ENCODE measurements at regions of chr7 and their contacts with region 1.

Region 1: DNA sequence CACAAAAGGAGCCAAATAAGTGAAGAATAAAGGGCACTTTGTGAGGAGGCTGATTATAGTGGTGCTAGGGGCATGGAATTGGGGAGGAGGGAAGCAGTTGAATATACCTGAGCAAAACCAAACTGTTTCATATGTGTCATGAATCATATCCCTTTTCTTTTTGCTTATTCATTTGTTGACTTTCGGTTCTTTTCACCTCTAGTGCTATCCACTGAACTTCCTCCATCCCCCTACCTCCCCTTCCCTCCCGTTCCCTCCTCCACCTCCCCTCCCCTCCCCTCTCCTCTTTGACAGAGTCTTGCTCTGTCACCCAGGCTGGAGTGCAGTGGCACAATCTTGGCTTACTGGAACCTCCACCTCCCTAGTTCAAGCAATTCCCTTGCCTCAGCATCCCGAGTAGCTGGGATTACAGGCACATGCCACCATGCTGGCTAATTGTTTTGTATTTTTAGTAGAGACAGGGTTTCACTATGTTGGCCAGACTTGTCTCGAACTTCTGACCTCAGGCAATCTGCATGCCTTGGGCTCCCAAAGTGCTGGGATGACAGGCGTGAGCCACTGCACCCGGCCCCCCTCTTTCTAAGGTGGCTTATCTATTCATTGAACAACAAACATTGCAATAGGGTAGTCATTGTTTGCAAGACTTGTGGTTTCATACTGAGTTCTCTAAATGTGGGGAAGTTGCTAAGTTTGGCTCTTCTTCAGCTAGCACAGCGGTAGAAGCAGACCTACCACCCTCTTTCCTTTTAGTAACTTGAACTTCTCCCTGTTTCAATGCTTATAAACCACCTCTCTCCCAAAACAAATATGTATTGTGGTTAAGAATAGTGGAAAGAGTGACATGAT is 150.4 kb upstream of the PRPS1L1 start:
- DNase-seq: peak; percentile 95
- ATAC-seq: peak; percentile 82
- H3K4me3 ChIP-seq: peak overlapping the region; percentile 56
- H3K27ac ChIP-seq: peak overlapping the region; percentile 99
- H3K4me1 ChIP-seq: peaks cover 54% of the 10 kb centered on the region
- H3K27me3 ChIP-seq: no peaks in the 10 kb centered on the region
- CTCF ChIP-seq: no peak

Region 2: GRCh38 chr7:17769918-17770317 is 408.1 kb before region 1 on chr7:
- CTCF ChIA-PET with region 1: no interaction called
- POLR2A ChIA-PET with region 1: interaction called, 3 read pairs
- intact Hi-C with region 1: loop called (anchors 2 kb)
- DNase-seq: peak; percentile 79
- ATAC-seq: peak; percentile 78
- H3K4me3 ChIP-seq: no peak overlapping the region
- H3K27ac ChIP-seq: no peak overlapping the region
- H3K4me1 ChIP-seq: peaks cover 21% of the 10 kb centered on the region
- H3K27me3 ChIP-seq: no peaks in the 10 kb centered on the region
- CTCF ChIP-seq: peak; percentile 92

Region 3: DNA sequence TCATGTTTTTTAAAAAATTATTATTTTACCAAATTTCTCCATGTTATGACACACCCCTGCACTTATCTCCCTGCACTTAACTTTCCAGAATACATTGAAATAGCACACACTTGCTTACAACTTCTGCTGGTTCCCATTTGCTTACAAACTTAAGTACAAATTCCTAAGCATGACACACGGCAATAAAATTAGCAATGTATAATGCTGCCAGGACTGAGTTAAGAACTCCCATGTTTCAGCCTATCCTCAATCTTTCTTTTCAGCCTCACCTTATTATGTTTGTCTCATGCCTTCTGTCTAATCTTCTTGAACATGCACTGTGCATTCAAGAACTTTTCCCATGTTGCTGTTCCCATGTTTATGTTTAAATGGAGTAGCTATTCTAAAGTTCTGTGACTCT is 191.2 kb before region 1 on chr7:
- CTCF ChIA-PET with region 1: no interaction called
- POLR2A ChIA-PET with region 1: no interaction called
- intact Hi-C with region 1: loop called (anchors 2 kb)
- DNase-seq: peak; percentile 89
- ATAC-seq: peak; percentile 92
- H3K4me3 ChIP-seq: no peak overlapping the region
- H3K27ac ChIP-seq: no peak overlapping the region; the same call in 1 of the 2 replicates
- H3K4me1 ChIP-seq: peaks cover 22% of the 10 kb centered on the region
- H3K27me3 ChIP-seq: no peaks in the 10 kb centered on the region
- CTCF ChIP-seq: no peak

Region 4: DNA sequence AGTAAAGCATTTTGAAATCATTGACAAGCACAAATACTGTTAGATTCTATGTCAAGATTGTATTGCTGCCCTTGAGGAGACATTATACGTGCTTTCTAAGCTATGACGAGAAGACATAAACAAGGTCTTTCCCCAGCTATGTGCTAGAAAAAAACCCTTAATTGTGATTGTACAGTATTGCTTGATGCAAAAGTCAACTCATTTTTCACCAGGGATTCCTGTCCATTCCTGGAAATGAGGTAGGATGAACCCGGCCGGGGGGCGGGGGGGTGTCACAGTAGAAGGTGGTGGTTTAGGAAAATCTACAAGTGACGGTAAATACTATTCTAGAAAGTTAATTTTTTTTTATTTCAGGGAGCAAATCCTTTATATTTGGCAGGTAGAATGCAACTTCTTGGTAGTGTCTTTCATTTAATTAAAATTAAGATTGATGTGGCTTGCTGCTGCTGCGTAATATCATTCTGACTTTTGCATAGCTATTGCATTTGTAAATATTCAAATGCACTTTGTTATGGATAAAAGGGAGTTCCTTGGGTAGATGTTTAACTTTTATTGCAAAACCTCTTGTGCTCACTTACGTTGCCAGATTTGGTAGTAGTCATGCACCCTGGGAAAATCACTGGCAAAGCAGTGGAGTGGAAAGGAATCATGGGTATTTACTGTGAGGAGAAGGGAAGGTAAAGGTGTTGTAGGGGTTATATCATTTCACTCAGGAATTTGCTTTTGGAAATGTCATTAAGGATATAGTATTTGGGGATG is 14.0 kb after region 1 on chr7:
- CTCF ChIA-PET with region 1: no interaction called
- POLR2A ChIA-PET with region 1: no interaction called
- intact Hi-C with region 1: no loop called
- DNase-seq: no peak
- ATAC-seq: no peak
- H3K4me3 ChIP-seq: no peak overlapping the region
- H3K27ac ChIP-seq: no peak overlapping the region
- H3K4me1 ChIP-seq: no peaks in the 10 kb centered on the region
- H3K27me3 ChIP-seq: no peaks in the 10 kb centered on the region
- CTCF ChIP-seq: no peak

Region 5: GRCh38 chr7:18206331-18206730 is 28.3 kb after region 1 on chr7:
- CTCF ChIA-PET with region 1: no interaction called
- POLR2A ChIA-PET with region 1: no interaction called
- intact Hi-C with region 1: loop called (anchors 1 kb)
- DNase-seq: no peak
- ATAC-seq: no peak
- H3K4me3 ChIP-seq: no peak overlapping the region
- H3K27ac ChIP-seq: no peak overlapping the region
- H3K4me1 ChIP-seq: peaks cover 9% of the 10 kb centered on the region
- H3K27me3 ChIP-seq: no peaks in the 10 kb centered on the region
- CTCF ChIP-seq: no peak

Region 6: DNA sequence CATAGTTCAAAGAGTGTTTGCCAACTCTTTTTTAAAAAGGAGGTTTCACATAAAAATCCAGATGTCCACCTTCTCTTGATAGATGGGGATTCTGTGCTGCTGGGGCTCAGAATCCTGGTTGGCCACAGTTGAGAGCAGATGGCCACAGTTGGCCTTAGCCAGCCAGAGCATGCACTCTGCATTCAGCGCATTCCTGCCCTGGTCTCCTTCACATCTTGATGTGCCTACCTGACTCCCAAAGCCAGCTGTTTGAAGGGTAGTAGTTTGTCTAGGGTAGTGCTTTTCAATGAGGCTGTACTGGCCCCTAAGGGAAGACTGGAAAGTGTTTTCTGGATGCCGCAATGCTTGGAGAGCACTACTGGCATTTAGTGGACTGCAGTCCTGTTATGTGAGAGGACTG is 109.4 kb after region 1 on chr7:
- CTCF ChIA-PET with region 1: no interaction called
- POLR2A ChIA-PET with region 1: no interaction called
- intact Hi-C with region 1: loop called (anchors 2 kb)
- DNase-seq: no peak
- ATAC-seq: no peak
- H3K4me3 ChIP-seq: no peak overlapping the region
- H3K27ac ChIP-seq: no peak overlapping the region
- H3K4me1 ChIP-seq: peaks cover 6% of the 10 kb centered on the region; the same call in 1 of the 2 replicates
- H3K27me3 ChIP-seq: no peaks in the 10 kb centered on the region
- CTCF ChIP-seq: no peak

Region 7: GRCh38 chr7:18320971-18321567 is 143.0 kb after region 1 on chr7:
- CTCF ChIA-PET with region 1: no interaction called
- POLR2A ChIA-PET with region 1: no interaction called
- intact Hi-C with region 1: loop called (anchors 1 kb)
- DNase-seq: peak; percentile 73
- ATAC-seq: peak; percentile 70
- H3K4me3 ChIP-seq: no peak overlapping the region
- H3K27ac ChIP-seq: no peak overlapping the region
- H3K4me1 ChIP-seq: peaks cover 15% of the 10 kb centered on the region
- H3K27me3 ChIP-seq: no peaks in the 10 kb centered on the region
- CTCF ChIP-seq: peak; percentile 69

Region 8: GRCh38 chr7:19079066-19079465 is 901.0 kb after region 1 on chr7:
- CTCF ChIA-PET with region 1: no interaction called
- POLR2A ChIA-PET with region 1: no interaction called
- intact Hi-C with region 1: no loop called
- DNase-seq: peak; percentile 84
- ATAC-seq: peak; percentile 100
- H3K4me3 ChIP-seq: peak overlapping the region; percentile 8; the same call in 1 of the 2 replicates
- H3K27ac ChIP-seq: peak overlapping the region; percentile 4
- H3K4me1 ChIP-seq: peaks cover 17% of the 10 kb centered on the region
- H3K27me3 ChIP-seq: no peaks in the 10 kb centered on the region
- CTCF ChIP-seq: no peak